Breast epithelium (tissue), 4 donors: ENCODE measurements at regions of chr10 and their contacts with region 1.

Region 1: GRCh38 chr10:52918714-52919305 is 146.2 kb upstream of the MBL2 start:
- DNase-seq: no peak
- H3K4me3 ChIP-seq: no peak overlapping the region
- H3K27ac ChIP-seq: no peak overlapping the region
- H3K4me1 ChIP-seq: no peaks in the 10 kb centered on the region
- H3K27me3 ChIP-seq: no peaks in the 10 kb centered on the region
- CTCF ChIP-seq: no peak
- POLR2A ChIP-seq: no peak

Region 2: GRCh38 chr10:52420656-52421055 is 498.2 kb before region 1 on chr10:
- intact Hi-C with region 1: loop called (anchors 5 kb)
- DNase-seq: no peak
- H3K4me3 ChIP-seq: no peak overlapping the region
- H3K27ac ChIP-seq: no peak overlapping the region
- H3K4me1 ChIP-seq: no peaks in the 10 kb centered on the region
- H3K27me3 ChIP-seq: no peaks in the 10 kb centered on the region
- CTCF ChIP-seq: no peak
- POLR2A ChIP-seq: no peak

Region 3: GRCh38 chr10:52757773-52758172 is 161.0 kb before region 1 on chr10:
- intact Hi-C with region 1: no loop called
- DNase-seq: no peak
- H3K4me3 ChIP-seq: no peak overlapping the region
- H3K27ac ChIP-seq: no peak overlapping the region
- H3K4me1 ChIP-seq: no peaks in the 10 kb centered on the region
- H3K27me3 ChIP-seq: no peaks in the 10 kb centered on the region
- CTCF ChIP-seq: no peak
- POLR2A ChIP-seq: no peak

Region 4: GRCh38 chr10:52836816-52837215 is 82.0 kb before region 1 on chr10:
- intact Hi-C with region 1: no loop called
- DNase-seq: no peak
- H3K4me3 ChIP-seq: no peak overlapping the region
- H3K27ac ChIP-seq: no peak overlapping the region
- H3K4me1 ChIP-seq: no peaks in the 10 kb centered on the region
- H3K27me3 ChIP-seq: no peaks in the 10 kb centered on the region
- CTCF ChIP-seq: no peak
- POLR2A ChIP-seq: no peak